ENCODE measurements at regions of chr5 and their contacts with region 1.

Region 1: DNA sequence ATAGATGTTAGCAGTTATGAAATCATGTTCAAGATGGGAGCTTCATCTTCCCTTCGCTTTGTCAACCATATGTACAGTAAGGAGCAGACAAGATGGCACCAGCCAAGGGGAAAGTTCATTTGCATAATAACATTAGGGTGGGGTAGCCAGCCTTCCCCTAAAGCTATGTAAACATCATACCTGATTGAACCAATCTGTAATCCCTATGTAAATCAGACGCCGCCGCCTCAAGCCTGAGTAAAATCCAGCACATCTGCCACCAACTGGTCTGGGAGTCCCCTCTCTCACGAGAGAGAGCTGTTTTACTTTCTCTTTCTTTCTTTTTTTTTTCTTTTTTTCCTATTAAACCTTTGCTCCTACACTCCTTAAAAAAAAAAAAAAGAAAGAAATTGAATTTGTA is 30.8 kb upstream of the REEP2 start:
- DNase-seq: no peak
- H3K4me3 ChIP-seq: no peak overlapping the region
- H3K27ac ChIP-seq: no peak overlapping the region
- H3K4me1 ChIP-seq: no peaks in the 10 kb centered on the region
- H3K27me3 ChIP-seq: no peaks in the 10 kb centered on the region
- CTCF ChIP-seq: no peak

Region 2: DNA sequence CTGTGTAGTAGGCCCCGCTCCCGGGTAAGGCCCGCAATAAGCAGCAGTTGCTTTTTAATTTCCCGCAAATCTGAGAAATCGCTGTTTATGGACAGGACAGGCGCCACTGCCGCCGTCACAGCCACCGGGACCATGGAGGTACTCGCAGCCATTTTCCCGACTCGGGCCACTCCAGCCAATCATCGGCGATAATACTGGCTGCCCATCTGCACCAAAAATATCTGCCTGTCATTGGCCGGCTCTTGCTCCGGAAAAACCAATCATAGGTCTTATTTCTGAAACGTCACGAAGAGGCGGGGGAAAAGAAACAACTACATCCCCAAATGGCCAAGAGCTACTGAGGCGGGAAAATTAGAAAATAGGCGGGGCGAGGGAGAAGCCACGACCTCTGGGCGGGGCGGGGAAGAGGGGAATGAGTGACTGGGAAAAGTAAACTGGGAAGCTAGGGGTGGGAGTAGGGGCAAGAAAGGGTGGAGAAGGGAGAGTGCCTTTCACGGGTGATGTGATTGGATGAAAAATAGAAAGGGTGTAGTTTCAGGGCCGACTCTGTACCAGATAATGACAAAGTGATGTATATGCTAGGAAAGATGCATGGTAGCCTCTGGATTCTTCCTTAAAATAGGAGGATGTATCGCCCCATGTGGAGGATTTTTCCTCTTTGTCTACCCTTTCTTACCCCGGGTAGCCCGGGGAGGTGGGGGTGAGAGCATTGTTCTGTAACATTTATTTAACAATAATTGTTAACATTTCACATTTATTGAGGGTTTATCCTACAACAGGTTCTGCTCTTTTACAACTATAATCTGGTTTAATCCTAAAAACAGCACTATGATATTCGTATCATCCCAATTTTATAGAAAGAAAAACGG is 194.6 kb before region 1 on chr5 and contains the start of gene CDC23:
- CTCF ChIA-PET with region 1: no interaction called
- dilution Hi-C with region 1: no loop called
- in situ Hi-C with region 1: loop called in 1 of 2 experiments (anchors 25 kb)
- intact Hi-C with region 1: no loop called
- DNase-seq: peak; percentile 99
- H3K4me3 ChIP-seq: peak within 1 kb of the TSS; percentile 68 to 98 (median 74)
- H3K27ac ChIP-seq: peak within 1 kb of the TSS; percentile 77
- H3K4me1 ChIP-seq: peaks cover 8% of the 10 kb centered on the region
- H3K27me3 ChIP-seq: no peaks in the 10 kb centered on the region
- CTCF ChIP-seq: no peak
- total RNA-seq, gene CDC23: 30.7 to 31.2 TPM

Region 3: DNA sequence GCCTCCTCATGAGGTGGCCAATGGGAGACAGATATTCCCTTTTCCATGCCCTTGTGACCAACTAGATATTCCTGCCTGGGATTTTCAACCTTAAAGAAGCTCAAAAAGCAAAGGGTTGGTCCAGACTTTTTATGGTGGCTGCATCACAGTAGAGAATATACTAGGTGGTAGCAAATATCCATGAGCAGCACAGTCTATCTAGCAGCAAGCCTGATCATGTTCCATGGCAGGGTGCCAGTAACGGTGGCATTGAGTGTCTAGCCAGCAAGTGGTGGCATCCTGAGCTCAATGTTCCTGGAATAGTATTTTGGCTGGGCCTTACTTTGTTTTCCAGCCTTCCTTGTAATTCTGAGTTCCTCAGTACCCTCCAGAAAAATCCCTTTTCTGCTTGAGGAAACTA is 102.2 kb before region 1 on chr5:
- CTCF ChIA-PET with region 1: no interaction called
- dilution Hi-C with region 1: no loop called
- in situ Hi-C with region 1: no loop called
- intact Hi-C with region 1: loop called (anchors 2 kb)
- DNase-seq: peak; percentile 57
- H3K4me3 ChIP-seq: no peak overlapping the region
- H3K27ac ChIP-seq: no peak overlapping the region
- H3K4me1 ChIP-seq: peaks cover 6% of the 10 kb centered on the region
- H3K27me3 ChIP-seq: no peaks in the 10 kb centered on the region
- CTCF ChIP-seq: peak in 1 of 2 donors; percentile 49

Region 4: DNA sequence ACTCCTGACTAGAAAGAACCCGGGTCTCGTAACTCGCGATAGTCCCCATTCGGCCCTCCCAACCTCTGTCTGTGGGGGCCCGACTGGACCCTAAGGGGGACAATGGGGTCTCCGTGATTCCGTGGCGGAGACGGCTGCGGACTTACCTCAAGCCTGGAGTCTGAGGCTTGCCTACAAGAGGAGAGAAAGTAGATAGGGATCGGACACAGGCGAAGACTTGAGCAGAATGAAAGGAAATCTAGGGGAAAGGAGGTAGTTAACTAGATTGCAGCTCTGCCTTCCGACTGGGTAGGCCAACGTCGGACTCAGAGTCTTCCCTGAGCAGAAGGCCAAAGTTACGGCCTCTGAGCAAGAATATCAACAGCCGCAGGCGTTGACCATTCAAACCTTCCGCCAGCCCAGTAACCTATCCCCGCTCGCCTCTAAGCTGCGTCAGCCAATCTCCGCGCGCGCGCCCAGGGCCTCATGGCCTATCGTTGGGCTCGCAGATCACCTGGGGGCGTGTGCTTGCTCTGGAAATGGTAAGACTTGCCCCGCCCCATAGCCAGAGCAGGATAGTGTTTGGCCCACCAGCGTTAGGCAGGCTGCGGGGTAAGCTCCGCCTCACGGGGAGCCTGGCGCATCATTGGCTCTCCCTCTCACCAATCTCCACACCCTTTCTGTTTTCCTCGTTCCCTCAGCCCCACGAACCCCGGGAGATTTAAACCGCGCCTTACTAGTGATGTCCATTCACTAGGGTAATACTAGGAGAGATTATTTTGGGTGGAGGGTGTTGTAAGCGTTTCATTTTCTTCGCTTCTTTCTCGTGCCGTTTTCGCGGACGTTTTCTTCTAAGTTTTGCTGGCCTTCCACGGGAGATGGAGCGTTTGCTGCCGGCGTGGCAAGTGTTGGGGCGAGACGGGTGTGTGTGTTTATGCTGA is 76.3 kb before region 1 on chr5 and contains the start of gene CDC25C:
- CTCF ChIA-PET with region 1: no interaction called
- dilution Hi-C with region 1: no loop called
- in situ Hi-C with region 1: no loop called
- intact Hi-C with region 1: no loop called
- DNase-seq: peak; percentile 100
- H3K4me3 ChIP-seq: peak within 1 kb of the TSS; percentile 59 to 79 (median 62)
- H3K27ac ChIP-seq: peak within 1 kb of the TSS; percentile 59
- H3K4me1 ChIP-seq: peaks cover 5% of the 10 kb centered on the region
- H3K27me3 ChIP-seq: no peaks in the 10 kb centered on the region
- CTCF ChIP-seq: no peak
- total RNA-seq, gene CDC25C: 0.67 to 5.8 TPM

Region 5: DNA sequence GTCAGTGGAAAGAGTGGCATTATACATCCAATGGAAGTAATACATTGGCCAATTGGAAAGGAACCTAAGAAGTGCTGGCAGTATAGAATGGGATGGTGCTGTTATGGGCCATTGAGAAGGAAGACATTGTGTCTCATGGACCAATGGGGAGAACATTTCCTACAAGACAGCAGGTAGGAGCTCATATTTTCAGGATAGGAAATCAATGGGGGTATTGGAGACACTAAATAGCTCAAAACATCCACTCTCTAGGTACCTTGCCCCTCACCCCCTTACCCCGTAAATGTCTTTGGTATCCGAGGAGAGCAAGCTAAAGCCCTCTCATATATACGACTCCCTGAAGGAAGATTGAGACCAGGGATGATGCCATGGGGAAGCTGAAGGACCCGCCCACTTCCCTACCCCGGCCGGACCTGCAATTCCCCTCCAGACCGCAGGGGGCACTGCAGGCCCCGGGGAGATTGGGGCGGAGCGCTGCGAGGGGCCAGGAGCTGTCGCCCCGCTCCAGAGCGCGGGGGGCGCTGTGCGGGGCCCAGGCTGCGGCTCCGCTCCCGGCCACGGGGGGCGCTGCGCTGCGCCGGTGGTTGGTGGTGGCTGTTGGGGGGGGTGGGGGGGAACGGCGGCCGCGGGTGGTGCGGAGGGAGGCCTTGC is 55.8 kb before region 1 on chr5 and contains the start of gene KDM3B:
- CTCF ChIA-PET with region 1: no interaction called
- dilution Hi-C with region 1: no loop called
- in situ Hi-C with region 1: no loop called
- intact Hi-C with region 1: no loop called
- DNase-seq: peak; percentile 81
- H3K4me3 ChIP-seq: peak within 1 kb of the TSS; percentile 77 to 83 (median 82)
- H3K27ac ChIP-seq: peak within 1 kb of the TSS; percentile 65
- H3K4me1 ChIP-seq: peaks cover 18% of the 10 kb centered on the region
- H3K27me3 ChIP-seq: no peaks in the 10 kb centered on the region
- CTCF ChIP-seq: peak; percentile 98
- total RNA-seq, gene KDM3B: 35.6 to 42.7 TPM

Region 6: DNA sequence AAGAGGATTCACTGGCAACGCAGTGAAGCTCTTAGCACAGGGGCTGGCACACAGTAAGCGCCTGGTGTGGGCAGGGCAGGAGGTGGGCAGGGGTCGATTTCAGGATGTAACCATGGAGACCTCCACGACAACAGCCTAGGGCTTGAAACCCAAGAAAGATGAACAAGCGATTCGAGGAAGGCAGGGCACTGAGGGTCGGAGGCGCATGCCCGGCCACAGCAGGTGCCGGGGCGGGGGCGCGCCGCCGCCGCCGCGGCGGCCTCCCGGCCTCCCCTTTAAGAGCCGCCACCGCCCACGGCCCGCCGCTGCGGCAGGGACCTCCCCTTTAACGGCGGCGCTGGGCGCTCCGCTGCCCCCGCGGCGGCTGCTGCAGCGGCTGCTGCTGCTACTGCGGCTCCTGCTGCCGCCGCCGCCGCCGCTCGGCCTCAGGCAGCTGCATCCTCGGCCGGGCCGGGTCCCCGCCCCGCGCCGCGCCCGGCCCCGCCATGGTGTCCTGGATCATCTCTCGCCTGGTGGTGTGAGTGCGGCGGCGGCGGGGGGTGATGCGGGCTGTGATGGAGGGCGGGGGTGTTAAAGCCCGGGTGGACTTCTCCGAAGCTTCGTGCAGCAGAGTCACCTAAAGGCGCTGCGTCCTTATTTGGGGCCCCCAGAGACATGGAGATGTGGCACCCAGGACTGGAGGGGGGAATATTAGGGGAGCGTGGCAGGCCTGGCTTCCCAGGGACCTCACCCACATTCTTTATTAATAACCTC is 30.9 kb after region 1 on chr5 and contains the start of gene REEP2:
- CTCF ChIA-PET with region 1: no interaction called
- dilution Hi-C with region 1: no loop called
- in situ Hi-C with region 1: no loop called
- intact Hi-C with region 1: loop called (anchors 2 kb)
- DNase-seq: peak; percentile 43
- H3K4me3 ChIP-seq: peak within 1 kb of the TSS; percentile 39 to 48 (median 43)
- H3K27ac ChIP-seq: no peak within 1 kb of the TSS
- H3K4me1 ChIP-seq: peaks cover 16% of the 10 kb centered on the region
- H3K27me3 ChIP-seq: no peaks in the 10 kb centered on the region
- CTCF ChIP-seq: no peak
- total RNA-seq, gene REEP2: 14.5 to 26.5 TPM